Heart right ventricle (tissue), 16 donors: ENCODE measurements at regions of chr6 and their contacts with region 1.

Region 1: GRCh38 chr6:159862103-159862502 is 28.7 kb upstream of the MAS1 start:
- DNase-seq: no peak
- ATAC-seq: no peak
- H3K4me3 ChIP-seq: no peak overlapping the region
- H3K27ac ChIP-seq: no peak overlapping the region
- H3K4me1 ChIP-seq: no peaks in the 10 kb centered on the region
- H3K27me3 ChIP-seq: peaks cover 0 to 17% (median 0%) of the 10 kb centered on the region in 7 donors
- CTCF ChIP-seq: no peak

Region 2: GRCh38 chr6:159342145-159342544 is 520.0 kb before region 1 on chr6:
- intact Hi-C with region 1: no loop called
- DNase-seq: no peak
- ATAC-seq: no peak
- H3K4me3 ChIP-seq: no peak overlapping the region
- H3K27ac ChIP-seq: no peak overlapping the region
- H3K4me1 ChIP-seq: no peaks in the 10 kb centered on the region
- H3K27me3 ChIP-seq: no peaks in the 10 kb centered on the region
- CTCF ChIP-seq: no peak

Region 3: DNA sequence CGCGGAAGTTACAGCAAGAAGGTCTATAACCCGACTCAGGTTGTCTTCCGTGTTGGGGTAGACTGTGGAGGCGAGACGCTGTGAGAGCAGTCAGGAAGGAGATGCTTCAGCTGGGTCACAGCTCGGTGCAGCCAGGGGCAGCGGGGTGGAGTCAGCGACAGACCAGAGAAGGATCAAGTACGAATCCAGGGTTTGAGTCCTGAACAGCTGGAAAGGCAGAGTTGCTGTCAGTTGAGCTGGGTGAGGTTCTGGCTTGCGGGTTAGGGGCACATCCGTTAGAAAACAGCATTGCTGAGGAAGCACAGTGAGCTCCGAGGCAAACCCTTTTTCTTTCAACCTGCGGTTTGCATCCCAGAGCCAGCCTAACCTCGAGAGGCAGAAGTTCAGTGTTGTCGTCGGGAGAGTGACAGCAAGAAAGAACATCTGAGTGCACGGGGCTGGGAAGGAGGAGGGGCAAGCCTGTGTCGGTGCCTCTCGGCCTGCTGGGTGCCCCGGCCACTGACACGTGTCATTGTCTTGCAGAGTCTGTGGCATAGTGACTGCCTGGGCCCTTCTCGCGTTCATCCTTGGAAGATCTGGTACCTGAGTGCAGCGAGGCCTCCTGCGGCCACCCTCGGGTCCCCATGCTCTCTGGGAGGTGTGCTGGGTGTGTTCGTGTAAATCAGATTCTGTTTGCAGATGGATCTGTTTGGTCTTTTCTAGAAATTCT is 42.0 kb before region 1 on chr6:
- intact Hi-C with region 1: no loop called
- DNase-seq: no peak
- ATAC-seq: peak in 1 of 8 donors; percentile 22
- H3K4me3 ChIP-seq: peak overlapping the region in 1 of 10 donors; percentile 9
- H3K27ac ChIP-seq: no peak overlapping the region
- H3K4me1 ChIP-seq: peaks cover 0 to 9% (median 0%) of the 10 kb centered on the region in 9 donors
- H3K27me3 ChIP-seq: peaks cover 0 to 3% (median 0%) of the 10 kb centered on the region in 7 donors
- CTCF ChIP-seq: no peak

Region 4: GRCh38 chr6:159880412-159880975 is 18.4 kb after region 1 on chr6:
- intact Hi-C with region 1: no loop called
- DNase-seq: no peak
- ATAC-seq: no peak
- H3K4me3 ChIP-seq: no peak overlapping the region
- H3K27ac ChIP-seq: no peak overlapping the region
- H3K4me1 ChIP-seq: peaks cover 0 to 3% (median 0%) of the 10 kb centered on the region in 9 donors
- H3K27me3 ChIP-seq: peaks cover 0 to 5% (median 0%) of the 10 kb centered on the region in 7 donors
- CTCF ChIP-seq: no peak

Region 5: GRCh38 chr6:159935065-159935464 is 73.0 kb after region 1 on chr6:
- intact Hi-C with region 1: loop called in 7 of 10 experiments (anchors 2 to 5 kb)
- DNase-seq: no peak
- ATAC-seq: peak in 5 of 8 donors; percentile 38 to 59 (median 52)
- H3K4me3 ChIP-seq: no peak overlapping the region
- H3K27ac ChIP-seq: no peak overlapping the region
- H3K4me1 ChIP-seq: peaks cover 0 to 26% (median 7%) of the 10 kb centered on the region in 9 donors
- H3K27me3 ChIP-seq: no peaks in the 10 kb centered on the region
- CTCF ChIP-seq: no peak

Region 6: DNA sequence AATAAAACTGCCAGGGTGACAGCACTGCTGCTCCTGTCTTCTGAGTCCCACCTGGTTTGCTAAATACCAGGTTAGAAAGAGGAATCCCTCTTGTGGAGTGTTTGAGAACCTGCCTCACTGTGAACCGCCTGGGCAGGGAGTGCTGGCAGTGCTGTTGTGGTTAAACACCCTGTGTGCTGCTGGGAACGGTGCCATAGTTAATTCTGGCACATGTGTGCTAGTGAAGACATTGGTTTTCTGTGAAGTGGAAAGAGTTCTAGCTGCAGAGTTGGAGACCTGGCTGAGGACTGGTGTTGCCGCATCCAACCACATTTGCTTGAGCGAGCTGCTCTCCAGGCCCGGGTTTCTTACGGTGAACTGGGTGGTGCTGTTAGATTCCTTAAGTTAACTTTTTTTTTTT is 179.5 kb after region 1 on chr6:
- intact Hi-C with region 1: loop called in 7 of 10 experiments (anchors 10 kb)
- DNase-seq: peak; percentile 39 to 63
- ATAC-seq: peak; percentile 38 to 93 (median 78)
- H3K4me3 ChIP-seq: no peak overlapping the region
- H3K27ac ChIP-seq: no peak overlapping the region
- H3K4me1 ChIP-seq: peaks cover 2 to 54% (median 29%) of the 10 kb centered on the region in 9 donors
- H3K27me3 ChIP-seq: no peaks in the 10 kb centered on the region
- CTCF ChIP-seq: peak in 4 of 9 donors; percentile 16 to 39 (median 36)

Region 7: DNA sequence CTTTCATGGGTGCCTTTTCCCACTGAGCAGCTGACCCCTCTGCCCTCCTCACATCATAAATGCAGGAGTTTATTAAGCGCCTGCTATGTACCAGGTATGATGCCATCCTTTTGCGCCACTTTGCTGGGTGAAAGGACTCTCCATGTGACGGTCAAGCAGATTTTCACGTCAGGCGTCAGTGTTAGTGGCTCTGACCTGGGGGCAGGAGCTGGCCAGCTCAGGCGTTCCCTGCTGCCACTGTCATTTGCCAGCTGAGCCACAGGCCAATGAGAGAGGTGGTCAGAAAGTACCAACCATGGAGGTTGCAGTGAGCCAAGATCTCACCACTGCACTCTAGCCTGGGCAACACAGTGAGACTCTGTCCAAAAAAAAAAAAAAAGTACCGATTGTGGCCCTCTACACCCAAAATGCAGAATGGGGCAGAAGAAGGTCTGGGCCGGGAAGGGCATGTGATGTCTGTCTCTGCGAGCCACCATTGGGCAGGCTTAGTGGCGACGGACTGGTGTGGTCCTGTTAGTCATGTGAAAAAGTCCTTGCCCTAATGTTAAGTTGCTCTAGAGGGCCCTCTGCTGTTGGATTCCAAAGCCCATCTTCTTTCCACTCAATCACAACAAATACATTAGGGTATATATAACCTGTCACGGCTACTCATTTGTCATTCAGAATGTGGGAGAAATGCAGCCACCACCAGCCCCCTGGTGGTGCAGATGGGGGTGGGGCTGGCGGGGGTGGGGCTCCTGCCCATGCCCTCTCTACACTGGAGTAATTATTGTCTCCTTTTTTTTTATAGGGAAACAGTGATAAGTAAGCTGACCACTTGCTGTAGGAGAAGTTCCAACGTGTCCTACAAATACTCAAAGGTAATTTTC is 241.1 kb after region 1 on chr6:
- intact Hi-C with region 1: loop called in 2 of 10 experiments (anchors 5 to 10 kb)
- DNase-seq: no peak
- ATAC-seq: peak in 1 of 8 donors; percentile 20
- H3K4me3 ChIP-seq: no peak overlapping the region
- H3K27ac ChIP-seq: no peak overlapping the region
- H3K4me1 ChIP-seq: peaks cover 0 to 27% (median 6%) of the 10 kb centered on the region in 9 donors
- H3K27me3 ChIP-seq: no peaks in the 10 kb centered on the region
- CTCF ChIP-seq: peak in 7 of 9 donors; percentile 16 to 44 (median 28)

Region 8: GRCh38 chr6:160534050-160534696 is 672.1 kb after region 1 on chr6:
- intact Hi-C with region 1: loop called in 4 of 10 experiments (anchors 5 to 10 kb)
- DNase-seq: peak; percentile 31 to 45
- ATAC-seq: peak in 7 of 8 donors; percentile 42 to 81 (median 61)
- H3K4me3 ChIP-seq: peak overlapping the region in 5 of 10 donors; percentile 8 to 41 (median 23)
- H3K27ac ChIP-seq: no peak overlapping the region
- H3K4me1 ChIP-seq: peaks cover 0 to 7% (median 0%) of the 10 kb centered on the region in 9 donors
- H3K27me3 ChIP-seq: peaks cover 0 to 6% (median under 1%) of the 10 kb centered on the region in 7 donors
- CTCF ChIP-seq: peak; percentile 75 to 96 (median 93)